ENCODE measurements at regions of chr15 and their contacts with region 1.

Region 1: DNA sequence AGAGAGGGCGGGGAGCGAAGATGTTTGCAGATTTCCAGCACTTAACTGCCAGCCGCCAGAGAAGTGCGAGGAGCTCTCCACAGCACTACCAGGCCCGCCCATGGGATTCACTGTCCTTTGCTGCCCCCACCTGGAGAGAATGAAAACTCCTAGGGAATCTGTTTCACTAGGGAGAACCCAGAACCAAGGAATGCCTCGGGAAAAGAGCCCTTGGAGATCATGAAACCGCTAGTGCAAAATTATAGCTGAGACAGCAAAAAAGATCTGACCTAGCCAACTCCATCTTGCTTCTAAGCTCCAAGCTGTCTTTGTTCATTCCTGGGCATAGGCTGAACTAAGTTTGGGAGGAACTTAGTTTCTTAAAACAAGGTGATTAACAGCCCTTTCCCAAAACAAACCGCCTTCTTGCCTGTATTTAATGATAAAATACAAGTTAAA is 82.6 kb upstream of the GCNT3 start:
- DNase-seq: peak; percentile 44 to 90 (median 82)
- H3K4me3 ChIP-seq: no peak overlapping the region
- H3K27ac ChIP-seq: no peak overlapping the region
- H3K27me3 ChIP-seq: no peaks in the 10 kb centered on the region
- CTCF ChIP-seq: peak; percentile 55 to 98 (median 87)

Region 2: GRCh38 chr15:58977887-58978286 is 551.1 kb before region 1 on chr15:
- intact Hi-C with region 1: loop called (anchors 5 to 10 kb)
- DNase-seq: no peak
- H3K4me3 ChIP-seq: no peak overlapping the region
- H3K27ac ChIP-seq: no peak overlapping the region
- H3K27me3 ChIP-seq: no peaks in the 10 kb centered on the region
- CTCF ChIP-seq: no peak

Region 3: GRCh38 chr15:59484399-59484798 is 44.6 kb before region 1 on chr15:
- intact Hi-C with region 1: no loop called
- DNase-seq: no peak
- H3K4me3 ChIP-seq: no peak overlapping the region
- H3K27ac ChIP-seq: no peak overlapping the region
- H3K27me3 ChIP-seq: no peaks in the 10 kb centered on the region
- CTCF ChIP-seq: no peak

Region 4: GRCh38 chr15:59594493-59594942 is 65.5 kb after region 1 on chr15:
- intact Hi-C with region 1: no loop called
- DNase-seq: no peak
- H3K4me3 ChIP-seq: no peak overlapping the region
- H3K27ac ChIP-seq: no peak overlapping the region
- H3K27me3 ChIP-seq: no peaks in the 10 kb centered on the region
- CTCF ChIP-seq: no peak